HepG2 (cell line): ENCODE measurements at regions of chr5 and their contacts with region 1.

Region 1: DNA sequence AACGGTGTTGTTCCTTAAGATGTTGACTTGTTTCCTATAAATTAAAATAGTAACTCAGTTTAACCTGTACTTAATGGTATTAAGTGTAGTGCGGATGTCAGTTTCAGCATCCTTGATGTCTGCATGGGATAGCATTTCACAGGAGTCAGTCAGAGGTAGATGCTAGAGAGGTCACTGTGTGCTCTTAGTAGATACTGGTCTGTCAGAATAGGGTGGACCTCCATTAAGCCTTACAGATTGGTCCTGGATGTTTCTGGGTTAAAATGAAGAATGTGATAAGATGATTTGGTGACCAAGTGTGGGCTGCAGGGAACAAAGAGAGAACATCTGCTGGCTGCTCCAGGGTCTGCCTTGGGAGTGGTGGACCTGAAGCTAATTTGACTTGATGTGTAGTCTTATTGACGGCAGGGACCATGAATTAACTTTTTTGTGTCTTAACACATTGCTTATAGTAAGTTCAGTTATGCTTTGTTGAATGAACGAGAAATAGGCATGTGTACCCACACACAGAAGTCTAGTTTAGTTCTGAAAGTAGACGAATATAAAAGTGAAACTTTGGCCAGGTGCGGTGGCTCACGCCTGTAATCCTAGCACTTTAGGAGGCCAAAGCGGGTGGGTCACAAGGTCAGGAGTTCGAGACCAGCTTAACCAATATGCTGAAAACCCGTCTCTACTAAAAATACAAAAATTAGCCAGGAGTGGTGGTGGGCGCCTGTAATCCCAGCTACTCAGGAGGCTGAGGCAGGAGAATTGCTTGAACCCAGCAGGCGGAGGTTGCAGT is 12.5 kb downstream of the RAB24 start:
- DNase-seq: no peak
- ATAC-seq: no peak
- H3K4me3 ChIP-seq: no peak overlapping the region
- H3K27ac ChIP-seq: no peak overlapping the region
- H3K4me1 ChIP-seq: peaks cover 4% of the 10 kb centered on the region; the same call in 1 of the 2 replicates
- H3K27me3 ChIP-seq: peaks cover 1 to 10% of the 10 kb centered on the region in 2 experiments; a peak in 3 of 5 replicates
- CTCF ChIP-seq: no peak
- EP300 ChIP-seq: no peak
- POLR2A ChIP-seq: no peak
- RAD21 ChIP-seq: no peak

Region 2: GRCh38 chr5:177276886-177277285 is 14.1 kb before region 1 on chr5:
- CTCF ChIA-PET with region 1: no interaction called
- POLR2A ChIA-PET with region 1: no interaction called
- in situ Hi-C with region 1: no loop called
- intact Hi-C with region 1: loop called (anchors 1 kb)
- DNase-seq: no peak
- ATAC-seq: no peak
- H3K4me3 ChIP-seq: no peak overlapping the region
- H3K27ac ChIP-seq: no peak overlapping the region
- H3K4me1 ChIP-seq: no peaks in the 10 kb centered on the region
- H3K27me3 ChIP-seq: no peaks in the 10 kb centered on the region; a peak in 1 of 5 replicates
- CTCF ChIP-seq: no peak
- EP300 ChIP-seq: no peak
- POLR2A ChIP-seq: no peak
- RAD21 ChIP-seq: no peak